Activated B cell treated with CpG ODN at 0.5 μM for 24 hours (primary cell): ENCODE measurements at regions of chr11 and their contacts with region 1.

Region 1: DNA sequence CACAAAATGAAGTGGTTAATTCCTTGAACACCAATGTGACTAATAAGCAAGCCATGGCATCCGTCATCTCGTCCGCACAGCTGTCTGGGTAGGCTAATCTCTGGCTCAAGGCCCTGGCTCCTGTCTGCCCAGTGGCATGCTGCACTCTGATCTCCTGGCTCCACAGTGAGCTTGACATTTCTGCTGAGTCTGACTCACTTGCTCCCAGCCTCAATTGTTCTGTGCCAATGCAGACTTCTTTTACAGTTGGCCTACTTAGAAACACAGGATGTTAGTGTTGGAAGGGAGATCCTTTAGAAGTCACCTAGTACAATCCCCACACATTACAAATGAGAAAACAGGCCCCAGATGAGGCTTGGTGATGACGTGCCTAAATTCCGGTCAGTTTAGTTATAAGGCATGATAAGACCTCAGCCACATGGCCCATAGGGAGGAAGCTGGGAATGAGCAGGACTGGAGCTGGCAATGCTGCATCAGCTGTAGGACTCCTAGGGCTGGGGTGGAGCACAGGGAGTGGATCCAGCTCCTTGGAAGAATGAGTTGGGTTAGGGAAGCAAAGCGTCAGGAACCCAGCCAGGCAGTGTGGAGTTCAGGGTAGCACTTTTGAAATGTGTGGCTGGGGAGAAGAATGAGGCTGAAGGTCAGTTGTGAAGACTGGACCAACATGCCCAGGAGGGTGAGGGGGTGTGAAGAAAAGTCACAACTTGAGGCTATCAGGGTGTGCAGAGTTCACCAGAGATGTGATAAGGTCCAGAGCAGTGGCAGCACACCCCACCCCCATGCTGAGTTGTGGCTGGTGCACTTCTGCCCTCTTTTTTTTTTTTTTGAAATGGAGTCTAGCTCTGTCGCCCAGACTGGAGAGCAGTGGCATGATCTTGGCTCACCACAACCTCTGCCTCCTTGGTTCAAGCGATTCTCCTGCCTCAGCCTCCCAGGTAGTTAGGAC is 70.2 kb upstream of the EED start:
- DNase-seq: no peak
- ATAC-seq: no peak
- H3K4me3 Mint-ChIP-seq: no peak overlapping the region
- H3K27ac Mint-ChIP-seq: no peak overlapping the region
- H3K4me1 Mint-ChIP-seq: peaks cover 8% of the 10 kb centered on the region
- H3K27me3 Mint-ChIP-seq: no peaks in the 10 kb centered on the region
- CTCF ChIP-seq: no peak

Region 2: DNA sequence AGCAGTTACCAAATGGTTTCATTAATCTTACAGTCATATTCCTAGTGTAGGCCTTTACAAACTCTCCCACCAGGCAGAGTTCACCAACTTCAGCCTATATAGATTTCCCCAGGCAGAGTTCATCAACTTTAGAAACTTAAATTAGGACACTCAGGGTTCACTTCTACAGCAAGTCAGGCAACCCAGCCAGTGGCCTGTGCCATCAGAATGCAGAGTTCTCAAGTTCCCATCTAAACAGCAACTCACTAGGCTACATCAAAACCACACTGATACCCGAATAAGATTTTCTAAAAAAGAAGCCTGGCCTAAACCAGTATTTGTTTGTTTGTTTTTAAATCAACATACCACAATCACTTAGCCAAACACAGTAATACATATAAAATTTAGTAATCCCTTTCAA is 139.2 kb before region 1 on chr11:
- CTCF ChIA-PET with region 1: no interaction called
- POLR2A ChIA-PET with region 1: no interaction called
- intact Hi-C with region 1: no loop called
- DNase-seq: no peak
- ATAC-seq: no peak
- H3K4me3 Mint-ChIP-seq: no peak overlapping the region
- H3K27ac Mint-ChIP-seq: no peak overlapping the region
- H3K4me1 Mint-ChIP-seq: peaks cover 55% of the 10 kb centered on the region
- H3K27me3 Mint-ChIP-seq: no peaks in the 10 kb centered on the region
- CTCF ChIP-seq: no peak

Region 3: GRCh38 chr11:86056351-86056854 is 118.0 kb before region 1 on chr11:
- CTCF ChIA-PET with region 1: no interaction called
- POLR2A ChIA-PET with region 1: no interaction called
- intact Hi-C with region 1: no loop called
- DNase-seq: no peak
- ATAC-seq: no peak
- H3K4me3 Mint-ChIP-seq: no peak overlapping the region
- H3K27ac Mint-ChIP-seq: peak overlapping the region; percentile 30
- H3K4me1 Mint-ChIP-seq: peaks cover 92% of the 10 kb centered on the region
- H3K27me3 Mint-ChIP-seq: no peaks in the 10 kb centered on the region
- CTCF ChIP-seq: no peak

Region 4: GRCh38 chr11:86116386-86116726 is 58.0 kb before region 1 on chr11:
- CTCF ChIA-PET with region 1: no interaction called
- POLR2A ChIA-PET with region 1: interaction called, 3 read pairs
- intact Hi-C with region 1: loop called (anchors 2 kb)
- DNase-seq: no peak
- ATAC-seq: peak; percentile 95
- H3K4me3 Mint-ChIP-seq: peak overlapping the region; percentile 46
- H3K27ac Mint-ChIP-seq: peak overlapping the region; percentile 87
- H3K4me1 Mint-ChIP-seq: peaks cover 21% of the 10 kb centered on the region
- H3K27me3 Mint-ChIP-seq: no peaks in the 10 kb centered on the region
- CTCF ChIP-seq: no peak

Region 5: DNA sequence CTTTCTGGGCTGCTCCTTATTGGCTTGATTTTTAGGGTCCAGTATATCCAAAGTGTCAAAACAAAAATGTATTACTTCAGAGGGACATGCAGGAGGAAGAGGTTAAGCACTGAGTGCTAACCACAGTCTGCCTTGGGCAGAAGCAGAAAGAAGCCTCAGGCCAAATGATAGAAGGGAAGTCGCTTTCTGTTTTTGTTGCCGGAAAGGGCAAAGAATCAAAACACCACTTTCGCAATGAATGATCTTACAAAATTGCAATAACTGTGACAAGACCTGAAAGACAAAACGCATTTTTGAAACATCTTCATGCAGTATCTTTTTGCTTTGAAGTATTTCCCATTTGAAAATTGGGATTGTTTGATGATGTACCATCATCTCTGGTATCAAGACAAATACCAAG is 35.4 kb before region 1 on chr11:
- CTCF ChIA-PET with region 1: no interaction called
- POLR2A ChIA-PET with region 1: no interaction called
- intact Hi-C with region 1: loop called (anchors 5 kb)
- DNase-seq: no peak
- ATAC-seq: peak; percentile 49
- H3K4me3 Mint-ChIP-seq: peak overlapping the region; percentile 5
- H3K27ac Mint-ChIP-seq: peak overlapping the region; percentile 51
- H3K4me1 Mint-ChIP-seq: peaks cover 14% of the 10 kb centered on the region
- H3K27me3 Mint-ChIP-seq: no peaks in the 10 kb centered on the region
- CTCF ChIP-seq: no peak

Region 6: GRCh38 chr11:86149792-86150191 is 24.6 kb before region 1 on chr11:
- CTCF ChIA-PET with region 1: no interaction called
- POLR2A ChIA-PET with region 1: no interaction called
- intact Hi-C with region 1: no loop called
- DNase-seq: no peak
- ATAC-seq: no peak
- H3K4me3 Mint-ChIP-seq: no peak overlapping the region
- H3K27ac Mint-ChIP-seq: no peak overlapping the region
- H3K4me1 Mint-ChIP-seq: peaks cover 8% of the 10 kb centered on the region
- H3K27me3 Mint-ChIP-seq: no peaks in the 10 kb centered on the region
- CTCF ChIP-seq: no peak

Region 7: GRCh38 chr11:86160546-86161149 is 13.7 kb before region 1 on chr11:
- CTCF ChIA-PET with region 1: no interaction called
- POLR2A ChIA-PET with region 1: no interaction called
- intact Hi-C with region 1: loop called (anchors 2 kb)
- DNase-seq: no peak
- ATAC-seq: no peak
- H3K4me3 Mint-ChIP-seq: no peak overlapping the region
- H3K27ac Mint-ChIP-seq: no peak overlapping the region
- H3K4me1 Mint-ChIP-seq: peaks cover 28% of the 10 kb centered on the region
- H3K27me3 Mint-ChIP-seq: no peaks in the 10 kb centered on the region
- CTCF ChIP-seq: no peak

Region 8: DNA sequence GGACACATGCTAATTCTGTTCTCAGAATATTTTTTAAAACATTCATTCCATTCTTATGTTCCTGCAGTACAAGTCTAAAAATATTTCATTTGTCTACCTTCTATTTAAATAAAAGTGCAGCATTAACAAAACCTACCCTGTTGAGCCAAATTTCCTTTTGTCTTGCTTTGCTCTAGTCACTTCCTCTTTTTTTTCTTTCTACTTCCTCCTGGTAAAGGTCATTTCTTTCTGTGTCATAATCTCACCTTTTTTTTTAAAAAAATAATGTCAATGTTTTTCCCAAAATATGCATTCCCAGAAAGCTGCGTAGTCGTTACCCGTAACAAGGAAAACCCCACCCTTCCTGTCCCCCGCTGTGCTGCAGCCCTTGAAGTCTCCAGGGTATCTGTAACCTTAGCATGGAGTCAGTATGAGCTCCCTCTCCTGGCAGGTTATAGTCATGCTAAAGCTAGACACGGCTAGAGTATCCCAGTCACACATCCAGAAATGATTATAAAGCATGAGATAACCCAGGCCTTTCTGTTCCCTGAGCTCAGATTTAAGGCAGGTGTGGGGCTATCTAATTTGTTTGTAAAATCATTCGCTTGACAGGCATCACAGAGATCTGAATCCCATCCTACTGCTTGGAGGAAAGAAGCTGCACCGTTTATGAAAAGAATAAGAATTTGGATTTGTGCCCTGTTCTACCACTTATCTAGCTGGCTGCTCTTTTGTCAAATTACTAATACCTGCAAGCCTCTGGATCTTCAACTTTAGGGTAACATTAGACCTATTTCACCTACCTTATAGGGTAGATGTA is 19.1 kb after region 1 on chr11:
- CTCF ChIA-PET with region 1: interaction called, 3 read pairs
- POLR2A ChIA-PET with region 1: interaction called, 3 read pairs
- intact Hi-C with region 1: loop called (anchors 1 kb)
- DNase-seq: peak; percentile 48
- ATAC-seq: peak; percentile 96
- H3K4me3 Mint-ChIP-seq: peak overlapping the region; percentile 76
- H3K27ac Mint-ChIP-seq: peak overlapping the region; percentile 92
- H3K4me1 Mint-ChIP-seq: peaks cover 30% of the 10 kb centered on the region
- H3K27me3 Mint-ChIP-seq: no peaks in the 10 kb centered on the region
- CTCF ChIP-seq: peak; percentile 50